A549 (cell line): ENCODE measurements at regions of chr19 and their contacts with region 1.

Region 1: GRCh38 chr19:10505583-10506229 is 2.5 kb upstream of the KEAP1 start:
- DNase-seq: peak; percentile 44 to 77
- ATAC-seq: peak in 1 of 2 experiments; percentile 17; a peak in 2 of 6 replicates
- H3K4me3 ChIP-seq: no peak overlapping the region
- H3K27ac ChIP-seq: no peak overlapping the region
- H3K4me1 ChIP-seq: peaks cover 25% of the 10 kb centered on the region
- CTCF ChIP-seq: peak; percentile 42
- EP300 ChIP-seq: no peak
- POLR2A ChIP-seq: no peak
- RAD21 ChIP-seq: peak; percentile 21 to 42; a peak in 2 of 5 replicates

Region 2: GRCh38 chr19:10517760-10518443 is 12.2 kb after region 1 on chr19:
- CTCF ChIA-PET with region 1: interaction called, 7 read pairs
- POLR2A ChIA-PET with region 1: interaction called, 13 read pairs
- DNase-seq: peak; percentile 45 to 62
- ATAC-seq: peak; percentile 75 to 82
- H3K4me3 ChIP-seq: peak overlapping the region; percentile 92
- H3K27ac ChIP-seq: peak overlapping the region; percentile 72 to 93
- H3K4me1 ChIP-seq: peaks cover 11% of the 10 kb centered on the region; the same call in 1 of the 3 replicates
- CTCF ChIP-seq: no peak
- EP300 ChIP-seq: no peak
- POLR2A ChIP-seq: no peak
- RAD21 ChIP-seq: no peak

Region 3: GRCh38 chr19:10565567-10566407 is 60.1 kb after region 1 on chr19 and contains the start of gene KRI1:
- CTCF ChIA-PET with region 1: interaction called, 11 read pairs
- POLR2A ChIA-PET with region 1: no interaction called
- DNase-seq: peak; percentile 90 to 95
- ATAC-seq: peak; percentile 68 to 77
- H3K4me3 ChIP-seq: peak within 1 kb of the TSS; percentile 75
- H3K27ac ChIP-seq: peak within 1 kb of the TSS; percentile 81 to 96
- H3K4me1 ChIP-seq: peaks cover 25% of the 10 kb centered on the region
- CTCF ChIP-seq: no peak
- EP300 ChIP-seq: no peak
- POLR2A ChIP-seq: peak; percentile 89
- RAD21 ChIP-seq: no peak
- polyA plus RNA-seq, gene KRI1: 10.6 and 21.6 TPM in 2 replicates

Region 4: DNA sequence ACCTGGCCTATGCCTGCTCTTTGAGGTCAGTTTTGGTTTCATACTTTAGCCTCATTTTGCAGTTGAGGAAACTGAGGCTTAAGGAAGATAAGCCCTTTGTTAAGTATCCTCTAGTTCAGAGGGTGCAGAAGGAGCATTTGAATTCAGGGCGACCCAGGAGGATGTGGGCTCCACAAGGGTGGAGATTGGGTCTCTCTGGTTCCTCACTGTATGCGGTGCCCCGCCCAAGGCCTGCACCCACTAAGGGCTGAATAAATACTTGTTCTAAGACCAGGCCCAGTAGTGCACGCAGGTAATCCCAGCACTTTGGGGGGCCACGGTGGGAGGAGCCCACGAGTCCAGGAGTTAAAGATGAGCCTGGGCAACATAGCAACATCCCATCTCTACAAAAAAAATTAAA is 118.9 kb after region 1 on chr19:
- CTCF ChIA-PET with region 1: no interaction called
- POLR2A ChIA-PET with region 1: no interaction called
- DNase-seq: no peak
- ATAC-seq: no peak
- H3K4me3 ChIP-seq: no peak overlapping the region; the same call in 2 of the 3 replicates
- H3K27ac ChIP-seq: no peak overlapping the region
- H3K4me1 ChIP-seq: 0 out of 3 replicates have a peak, but pooled peaks cover 4% of the 10 kb centered on the region
- CTCF ChIP-seq: no peak
- EP300 ChIP-seq: no peak
- POLR2A ChIP-seq: no peak
- RAD21 ChIP-seq: no peak

Region 5: DNA sequence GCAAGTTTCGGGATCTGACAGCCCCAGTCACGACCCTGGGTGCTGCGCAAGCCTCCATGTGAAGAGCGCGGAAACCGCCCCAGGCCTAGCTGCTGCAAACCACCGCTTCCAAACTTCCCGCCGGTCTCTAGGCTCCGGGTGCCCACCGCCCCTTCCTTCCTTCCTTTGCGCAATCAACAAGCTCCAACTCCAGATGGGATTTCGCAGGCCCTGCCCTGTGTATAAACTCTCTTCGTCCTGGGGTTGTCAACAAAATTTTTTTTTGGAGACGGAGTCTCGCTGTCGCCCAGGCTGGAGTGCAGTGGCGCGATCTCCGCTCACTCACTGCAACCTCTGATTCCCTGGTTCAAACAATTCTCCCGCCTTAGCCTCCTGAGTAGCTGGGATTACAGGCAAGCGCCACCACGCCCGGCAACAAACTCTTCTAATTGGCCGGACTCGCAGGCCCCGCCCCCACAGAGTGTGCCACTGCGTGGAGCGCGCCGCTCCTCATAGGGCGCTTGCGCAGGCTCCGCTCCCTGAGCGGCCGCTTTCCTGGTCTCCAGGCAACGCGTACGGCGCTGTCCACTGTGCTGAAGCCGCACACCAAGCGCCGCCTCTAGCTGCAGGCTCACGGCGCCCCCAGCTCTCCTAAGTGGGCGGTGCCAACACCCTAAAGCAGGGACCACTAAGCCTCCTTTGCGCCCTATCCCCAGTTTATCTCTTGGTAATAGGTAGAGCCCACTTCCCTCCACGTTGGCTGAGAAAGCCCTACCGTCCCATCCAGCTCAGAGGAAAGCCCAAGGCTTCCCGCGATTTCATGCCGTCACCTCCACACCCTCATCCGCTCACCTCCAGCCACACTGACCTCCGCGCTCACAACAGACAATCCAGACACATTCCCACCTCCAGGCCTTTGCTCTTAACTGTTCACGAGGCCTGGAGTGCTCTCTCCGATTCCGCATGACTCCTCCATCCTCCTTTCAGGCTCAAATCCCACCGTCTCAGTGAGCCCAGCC is 190.0 kb after region 1 on chr19:
- CTCF ChIA-PET with region 1: interaction called, 11 read pairs
- POLR2A ChIA-PET with region 1: no interaction called
- DNase-seq: peak; percentile 78 to 92
- ATAC-seq: peak; percentile 92
- H3K4me3 ChIP-seq: peak overlapping the region; percentile 18; the same call in 1 of the 3 replicates
- H3K27ac ChIP-seq: no peak overlapping the region
- H3K4me1 ChIP-seq: peaks cover 9% of the 10 kb centered on the region; the same call in 1 of the 3 replicates
- CTCF ChIP-seq: no peak
- EP300 ChIP-seq: no peak
- POLR2A ChIP-seq: no peak
- RAD21 ChIP-seq: no peak